ENCODE measurements at regions of chr2 and their contacts with region 1.

Region 1: GRCh38 chr2:237483040-237483721 is 3.9 kb upstream of the MLPH start:
- DNase-seq: peak; percentile 57
- H3K4me3 ChIP-seq: no peak overlapping the region
- CTCF ChIP-seq: peak; percentile 59

Region 2: GRCh38 chr2:237262838-237263771 is 220.1 kb before region 1 on chr2:
- CTCF ChIA-PET with region 1: no interaction called
- POLR2A ChIA-PET with region 1: no interaction called
- DNase-seq: peak; percentile 70
- H3K4me3 ChIP-seq: no peak overlapping the region
- CTCF ChIP-seq: no peak

Region 3: GRCh38 chr2:237500681-237501424 is 17.7 kb after region 1 on chr2:
- CTCF ChIA-PET with region 1: interaction called, 47 read pairs
- POLR2A ChIA-PET with region 1: interaction called, 11 read pairs
- DNase-seq: peak; percentile 100
- H3K4me3 ChIP-seq: no peak overlapping the region; the same call in 1 of the 2 replicates
- CTCF ChIP-seq: no peak